Heart left ventricle (tissue), 16 donors: ENCODE measurements at regions of chr12 and their contacts with region 1.

Region 1: DNA sequence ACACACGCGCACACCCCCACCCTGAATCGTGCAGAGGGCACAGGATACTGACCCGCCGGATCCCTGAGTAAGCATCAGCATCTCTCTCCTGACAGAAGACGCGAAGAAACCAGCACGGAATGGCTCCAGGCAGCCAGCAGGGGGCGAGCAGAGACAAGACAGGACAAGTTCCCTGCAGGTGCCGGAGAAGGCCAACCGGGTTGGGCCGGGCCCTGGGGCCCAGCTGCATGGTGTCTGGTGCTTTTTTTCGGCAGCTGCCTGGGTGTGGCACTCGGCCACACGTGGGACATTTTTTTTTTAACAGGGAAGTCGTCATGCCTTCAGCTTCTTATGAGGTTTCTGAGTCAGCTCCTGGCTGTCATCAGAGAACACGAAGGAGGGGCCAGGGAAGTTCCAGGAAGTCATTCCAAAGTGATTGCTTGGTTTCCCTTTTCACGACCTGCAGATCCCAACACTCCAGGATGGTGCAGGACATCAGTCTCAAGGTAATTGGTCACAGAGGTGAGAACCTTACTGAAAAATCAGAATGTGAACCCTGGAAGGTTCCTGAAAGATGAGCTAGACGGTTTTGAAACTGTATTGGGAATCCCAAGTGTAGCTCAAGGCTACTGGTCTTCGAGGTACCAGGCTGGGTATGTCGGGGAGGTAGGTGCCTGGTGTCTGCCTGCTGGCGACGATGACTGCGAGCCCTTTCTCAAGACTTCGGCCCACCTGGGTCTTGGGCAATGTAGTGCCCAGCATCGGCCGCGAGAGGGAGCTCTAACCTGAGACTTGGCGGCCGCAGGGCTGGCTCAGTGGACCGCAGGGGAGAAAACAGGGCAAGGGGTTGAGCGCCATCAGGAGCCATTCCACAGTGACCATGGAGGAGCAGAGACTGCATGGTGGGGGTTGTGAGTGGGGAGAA is 190.8 kb upstream of the PRMT8 start:
- DNase-seq: peak; percentile 89 to 93 (median 92)
- ATAC-seq: peak; percentile 55 to 81 (median 67)
- H3K4me3 ChIP-seq: peak overlapping the region in 4 of 12 donors; percentile 4 to 33 (median 16)
- H3K27ac ChIP-seq: peak overlapping the region in 6 of 12 donors; percentile 7 to 62 (median 40)
- H3K4me1 ChIP-seq: peaks cover 0 to 30% (median 26%) of the 10 kb centered on the region in 12 donors
- H3K27me3 ChIP-seq: no peaks in the 10 kb centered on the region
- CTCF ChIP-seq: peak; percentile 67 to 97 (median 96)
- POLR2A ChIP-seq: no peak

Region 2: DNA sequence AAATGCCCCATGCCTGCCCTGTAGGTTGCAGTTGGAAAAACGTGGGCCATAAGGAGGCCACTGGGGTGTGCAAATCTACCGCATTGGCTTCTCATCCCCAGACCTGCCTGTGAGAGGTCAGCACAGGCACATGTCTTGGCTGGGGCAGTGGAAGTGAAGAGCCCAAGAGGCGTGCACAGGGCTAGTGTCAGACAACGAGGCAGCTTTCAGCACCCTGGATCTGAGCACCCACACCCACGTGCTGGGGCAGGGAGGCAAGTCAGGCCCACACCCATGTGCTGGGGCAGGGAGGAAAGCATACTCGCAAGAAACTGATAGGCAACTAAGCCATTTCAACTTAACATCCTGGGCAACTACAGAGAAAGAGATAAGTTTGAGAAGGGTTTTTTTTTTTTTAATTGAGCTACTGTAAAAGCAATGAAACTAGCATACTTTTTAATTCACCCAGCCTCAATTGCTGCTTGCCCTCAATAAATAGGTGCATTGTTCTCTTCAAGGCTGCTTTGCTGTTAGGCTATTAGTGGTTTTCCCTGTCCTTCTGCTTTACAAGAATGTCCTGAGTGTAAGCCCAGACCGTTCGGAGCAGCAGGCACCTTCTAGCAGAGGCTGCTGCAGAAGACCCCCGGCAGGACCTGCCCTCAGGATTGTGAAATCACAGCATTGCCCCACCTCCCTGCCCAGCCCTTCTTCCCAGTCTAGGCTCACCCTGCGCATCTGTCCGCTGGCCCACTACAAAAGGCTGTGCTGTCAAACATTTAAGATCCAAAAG is 860.7 kb before region 1 on chr12:
- intact Hi-C with region 1: no loop called
- DNase-seq: peak in 4 of 5 donors; percentile 52 to 84 (median 60)
- ATAC-seq: peak; percentile 74 to 89 (median 88)
- H3K4me3 ChIP-seq: no peak overlapping the region
- H3K27ac ChIP-seq: peak overlapping the region in 6 of 12 donors; percentile 16 to 58 (median 34)
- H3K4me1 ChIP-seq: peaks cover 0 to 72% (median 27%) of the 10 kb centered on the region in 12 donors
- H3K27me3 ChIP-seq: no peaks in the 10 kb centered on the region
- CTCF ChIP-seq: no peak
- POLR2A ChIP-seq: no peak

Region 3: GRCh38 chr12:3041558-3042164 is 258.5 kb before region 1 on chr12:
- intact Hi-C with region 1: no loop called
- DNase-seq: peak; percentile 51 to 63 (median 60)
- ATAC-seq: peak in 3 of 4 donors; percentile 27 to 53 (median 35)
- H3K4me3 ChIP-seq: no peak overlapping the region
- H3K27ac ChIP-seq: peak overlapping the region in 1 of 12 donors; percentile 35
- H3K4me1 ChIP-seq: peaks cover 0 to 24% (median 5%) of the 10 kb centered on the region in 12 donors
- H3K27me3 ChIP-seq: peaks cover 0 to 2% (median 0%) of the 10 kb centered on the region in 9 donors
- CTCF ChIP-seq: peak; percentile 47 to 75 (median 66)
- POLR2A ChIP-seq: no peak

Region 4: GRCh38 chr12:3342056-3342455 is 41.9 kb after region 1 on chr12:
- intact Hi-C with region 1: loop called in 2 of 10 experiments (anchors 2 to 5 kb)
- DNase-seq: peak in 4 of 5 donors; percentile 65 to 76 (median 70)
- ATAC-seq: peak; percentile 79 to 91 (median 80)
- H3K4me3 ChIP-seq: no peak overlapping the region
- H3K27ac ChIP-seq: peak overlapping the region in 7 of 12 donors; percentile 12 to 63 (median 55)
- H3K4me1 ChIP-seq: peaks cover 0 to 24% (median 6%) of the 10 kb centered on the region in 12 donors
- H3K27me3 ChIP-seq: no peaks in the 10 kb centered on the region
- CTCF ChIP-seq: peak; percentile 35 to 78 (median 62)
- POLR2A ChIP-seq: no peak

Region 5: DNA sequence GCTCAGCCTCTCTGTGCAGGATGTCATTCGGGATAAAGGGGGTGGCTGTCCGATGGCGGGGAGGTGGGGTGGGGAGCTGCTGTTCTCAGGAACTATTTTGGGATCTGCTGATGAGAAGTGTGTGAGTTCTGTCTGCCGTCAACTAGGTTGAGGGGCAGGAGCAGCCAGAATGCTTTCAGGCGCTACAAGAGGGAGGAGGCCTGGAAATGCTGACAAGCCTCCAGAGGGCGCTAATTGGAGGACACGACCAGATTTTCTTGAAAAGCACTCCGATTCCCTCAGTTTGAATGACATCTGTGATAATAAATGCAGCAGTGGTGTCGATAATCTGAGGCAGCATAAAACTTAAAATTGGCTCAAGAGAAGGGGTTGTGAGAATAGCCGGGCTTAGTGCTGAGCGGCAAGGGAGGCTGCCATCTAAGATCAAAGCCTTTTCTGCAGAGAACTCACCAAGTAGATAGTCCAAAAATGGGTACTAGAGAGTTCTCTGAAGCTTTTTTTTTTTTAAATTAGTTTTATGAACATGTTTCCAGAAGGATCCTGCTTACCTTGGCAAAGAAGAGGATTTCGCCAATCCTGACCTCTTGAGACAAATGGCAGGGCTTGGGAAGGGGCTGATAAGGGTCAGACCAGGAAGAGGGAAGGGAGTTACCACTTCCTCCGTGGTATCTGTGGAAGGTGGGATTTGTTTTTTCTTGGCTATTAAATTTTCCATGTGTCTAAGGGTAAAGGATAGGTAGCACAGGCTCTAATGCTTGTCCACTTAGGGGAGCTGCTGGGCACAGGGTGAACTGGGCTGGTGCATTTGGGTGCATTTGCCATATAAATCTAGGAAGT is 358.4 kb after region 1 on chr12:
- intact Hi-C with region 1: loop called in 1 of 10 experiments (anchors 5 kb)
- DNase-seq: peak in 3 of 5 donors; percentile 28 to 44 (median 41)
- ATAC-seq: peak; percentile 47 to 77 (median 56)
- H3K4me3 ChIP-seq: no peak overlapping the region
- H3K27ac ChIP-seq: no peak overlapping the region
- H3K4me1 ChIP-seq: peaks cover 0 to 19% (median 5%) of the 10 kb centered on the region in 12 donors
- H3K27me3 ChIP-seq: no peaks in the 10 kb centered on the region
- CTCF ChIP-seq: peak; percentile 26 to 62 (median 46)
- POLR2A ChIP-seq: no peak

Region 6: GRCh38 chr12:3680896-3681594 is 380.9 kb after region 1 on chr12:
- intact Hi-C with region 1: loop called in 4 of 10 experiments (anchors 10 kb)
- DNase-seq: peak; percentile 49 to 83 (median 68)
- ATAC-seq: peak in 3 of 4 donors; percentile 28 to 37 (median 35)
- H3K4me3 ChIP-seq: no peak overlapping the region
- H3K27ac ChIP-seq: peak overlapping the region in 3 of 12 donors; percentile 7 to 65 (median 28)
- H3K4me1 ChIP-seq: peaks cover 0 to 34% (median 7%) of the 10 kb centered on the region in 12 donors
- H3K27me3 ChIP-seq: no peaks in the 10 kb centered on the region
- CTCF ChIP-seq: peak in 9 of 12 donors; percentile 19 to 55 (median 30)
- POLR2A ChIP-seq: no peak

Region 7: GRCh38 chr12:3803865-3804472 is 503.8 kb after region 1 on chr12:
- intact Hi-C with region 1: loop called (anchors 1 to 5 kb)
- DNase-seq: peak; percentile 67 to 80 (median 72)
- ATAC-seq: peak in 3 of 4 donors; percentile 82 to 87 (median 84)
- H3K4me3 ChIP-seq: no peak overlapping the region
- H3K27ac ChIP-seq: no peak overlapping the region
- H3K4me1 ChIP-seq: no peaks in the 10 kb centered on the region
- H3K27me3 ChIP-seq: no peaks in the 10 kb centered on the region
- CTCF ChIP-seq: peak; percentile 71 to 90 (median 84)
- POLR2A ChIP-seq: no peak